Breast epithelium (tissue), 4 donors: ENCODE measurements at regions of chr6 and their contacts with region 1.

Region 1: DNA sequence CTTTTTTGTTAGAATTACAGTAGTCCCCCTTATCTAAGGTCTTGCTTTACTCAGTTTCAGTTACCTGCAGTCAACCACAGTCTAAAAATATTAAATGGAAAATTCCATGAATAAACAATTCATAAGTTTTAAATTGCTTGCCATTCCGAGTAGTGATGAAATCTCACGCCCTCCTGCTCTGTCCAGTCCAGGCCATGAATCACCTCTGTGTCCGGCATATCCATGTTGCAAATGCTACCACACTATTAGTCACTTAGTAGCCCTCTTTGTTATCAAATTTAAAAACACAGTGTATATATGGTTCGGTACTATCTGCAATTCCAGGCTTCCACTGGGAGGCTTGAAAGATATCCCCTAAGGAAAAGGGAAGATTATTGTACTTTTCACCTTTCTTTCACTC is 164.6 kb upstream of the FAM83B start:
- DNase-seq: no peak
- H3K4me3 ChIP-seq: no peak overlapping the region
- H3K27ac ChIP-seq: no peak overlapping the region
- H3K4me1 ChIP-seq: no peaks in the 10 kb centered on the region
- H3K27me3 ChIP-seq: no peaks in the 10 kb centered on the region
- CTCF ChIP-seq: no peak
- POLR2A ChIP-seq: no peak

Region 2: DNA sequence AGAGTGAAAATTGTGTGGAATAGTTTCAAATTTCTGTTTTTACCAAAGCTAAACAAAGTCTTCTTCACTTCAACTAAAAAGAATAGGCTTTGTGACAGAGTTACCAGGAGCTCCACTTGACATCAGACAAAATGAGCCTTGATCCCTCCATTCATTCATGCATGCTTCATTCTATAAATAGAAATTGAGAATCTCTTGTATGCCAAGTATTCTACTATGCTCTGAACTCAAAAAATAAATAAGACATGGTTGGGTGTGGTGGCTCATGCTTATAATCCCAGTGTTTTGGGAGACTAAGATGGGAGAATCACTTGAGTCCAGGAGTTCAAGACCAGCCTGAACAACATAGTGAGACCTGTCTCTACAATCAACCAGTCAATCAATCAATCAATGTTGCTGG is 72.0 kb before region 1 on chr6:
- intact Hi-C with region 1: no loop called
- DNase-seq: no peak
- H3K4me3 ChIP-seq: no peak overlapping the region
- H3K27ac ChIP-seq: no peak overlapping the region
- H3K4me1 ChIP-seq: no peaks in the 10 kb centered on the region
- H3K27me3 ChIP-seq: no peaks in the 10 kb centered on the region
- CTCF ChIP-seq: no peak
- POLR2A ChIP-seq: no peak

Region 3: DNA sequence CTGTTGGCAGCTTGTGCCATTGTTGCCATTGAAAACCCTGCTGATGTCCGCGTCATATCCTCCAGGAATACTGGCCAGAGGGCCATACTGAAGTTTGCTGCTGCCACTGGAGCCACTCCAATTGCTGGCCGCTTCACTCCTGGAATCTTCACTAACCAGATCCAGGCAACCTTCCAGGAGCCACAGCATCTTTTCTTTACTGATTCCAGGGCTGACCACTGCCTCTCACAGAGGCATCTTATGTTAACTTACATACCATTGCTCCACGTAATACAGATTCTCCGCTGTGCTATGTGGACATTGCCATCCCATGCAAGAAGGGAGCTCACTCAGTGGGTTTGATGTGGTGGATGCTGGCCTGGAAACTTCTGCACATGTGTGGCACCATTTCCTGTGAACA is 57.2 kb before region 1 on chr6:
- intact Hi-C with region 1: no loop called
- DNase-seq: no peak
- H3K4me3 ChIP-seq: no peak overlapping the region
- H3K27ac ChIP-seq: no peak overlapping the region
- H3K4me1 ChIP-seq: no peaks in the 10 kb centered on the region
- H3K27me3 ChIP-seq: no peaks in the 10 kb centered on the region
- CTCF ChIP-seq: no peak
- POLR2A ChIP-seq: no peak

Region 4: DNA sequence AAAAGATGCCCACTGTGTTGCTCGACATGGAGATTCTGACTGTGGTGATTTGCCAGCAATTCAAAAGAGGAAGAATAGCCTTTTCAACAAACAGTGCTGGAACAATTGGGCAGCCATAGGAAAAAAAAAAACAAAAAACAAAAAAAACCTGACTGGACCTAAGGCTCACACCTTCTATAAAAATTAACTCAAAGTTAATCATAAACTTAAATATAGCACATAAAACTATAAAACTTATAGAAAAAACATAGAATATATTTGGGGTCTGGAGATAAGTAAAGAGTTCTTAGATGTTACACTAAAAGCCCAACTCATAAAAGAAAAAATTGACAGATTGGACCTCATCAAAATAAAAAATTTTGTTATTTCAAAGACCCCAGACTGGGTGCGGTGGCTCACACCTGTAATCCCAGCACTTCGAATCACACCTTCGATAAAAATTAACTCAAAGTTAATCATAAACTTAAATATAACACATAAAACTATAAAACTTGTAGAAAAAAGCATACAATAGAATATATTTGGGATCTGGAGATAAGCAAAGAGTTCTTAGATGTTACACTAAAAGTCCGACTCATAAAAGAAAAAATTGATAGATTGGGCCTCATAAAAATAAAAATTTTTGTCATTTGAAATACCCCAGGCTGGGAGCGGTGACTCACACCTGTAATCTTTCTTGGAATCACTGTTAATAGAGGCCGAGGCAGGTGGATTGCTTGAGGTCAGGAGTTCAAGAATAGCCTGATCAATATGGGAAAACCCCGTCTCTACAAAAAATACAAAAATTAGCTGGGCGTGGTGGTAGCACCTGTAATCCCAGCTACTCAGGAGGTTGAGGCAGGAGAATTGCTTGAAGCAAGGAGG is 49.0 kb after region 1 on chr6:
- intact Hi-C with region 1: loop called (anchors 2 kb)
- DNase-seq: no peak
- H3K4me3 ChIP-seq: no peak overlapping the region
- H3K27ac ChIP-seq: no peak overlapping the region
- H3K4me1 ChIP-seq: no peaks in the 10 kb centered on the region
- H3K27me3 ChIP-seq: no peaks in the 10 kb centered on the region
- CTCF ChIP-seq: no peak
- POLR2A ChIP-seq: no peak